Sciatic nerve (tissue), 2 donors: ENCODE measurements at regions of chr18 and their contacts with region 1.

Region 1: GRCh38 chr18:13216092-13216582 is 2.4 kb upstream of the LDLRAD4 start:
- DNase-seq: peak; percentile 82
- ATAC-seq: peak; percentile 89

Region 2: GRCh38 chr18:13178976-13179375 is 37.2 kb before region 1 on chr18:
- intact Hi-C with region 1: loop called (anchors 1 kb)
- DNase-seq: no peak
- ATAC-seq: no peak

Region 3: DNA sequence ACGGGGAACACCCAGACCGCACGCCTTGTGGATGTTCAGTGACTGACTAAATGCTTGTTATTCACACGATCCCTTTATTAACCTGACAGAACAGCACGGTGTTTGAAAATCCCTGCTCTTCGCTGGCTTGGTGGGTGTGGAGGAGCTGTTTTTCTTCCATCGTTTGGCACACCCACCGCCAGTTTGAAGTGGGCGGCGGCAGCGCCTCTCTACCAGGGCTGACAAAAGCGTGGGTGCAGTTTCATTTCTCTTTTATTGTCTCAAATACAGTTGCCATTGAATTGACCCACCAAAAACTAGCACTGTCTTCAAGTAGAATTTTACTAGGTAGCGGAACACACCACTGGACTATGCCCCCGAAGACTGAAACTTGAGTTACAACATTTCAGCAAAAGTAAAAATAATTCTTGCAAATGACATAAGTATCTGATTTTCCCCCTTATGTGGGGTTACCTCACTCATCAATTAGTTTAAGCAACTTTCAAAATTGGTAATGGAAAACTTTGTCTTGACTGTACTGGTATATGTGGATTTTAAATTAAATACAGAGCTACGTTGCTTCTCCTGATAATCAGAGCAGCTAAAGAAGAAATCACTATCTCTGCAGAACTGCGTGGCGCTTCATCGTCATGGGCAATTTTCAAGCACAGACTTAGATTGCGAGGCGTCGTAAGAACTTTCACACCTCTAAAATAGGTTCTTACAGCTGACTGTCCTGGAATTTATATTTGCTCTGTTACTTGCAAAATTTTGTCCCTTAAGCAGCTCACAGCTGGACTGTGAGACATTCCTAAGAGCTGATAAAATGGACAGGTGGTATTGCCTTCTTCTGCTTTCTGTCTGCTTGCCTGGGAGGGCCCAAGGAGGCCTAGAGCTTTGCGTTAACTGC is 63.3 kb after region 1 on chr18:
- intact Hi-C with region 1: no loop called
- DNase-seq: peak; percentile 30
- ATAC-seq: no peak

Region 4: DNA sequence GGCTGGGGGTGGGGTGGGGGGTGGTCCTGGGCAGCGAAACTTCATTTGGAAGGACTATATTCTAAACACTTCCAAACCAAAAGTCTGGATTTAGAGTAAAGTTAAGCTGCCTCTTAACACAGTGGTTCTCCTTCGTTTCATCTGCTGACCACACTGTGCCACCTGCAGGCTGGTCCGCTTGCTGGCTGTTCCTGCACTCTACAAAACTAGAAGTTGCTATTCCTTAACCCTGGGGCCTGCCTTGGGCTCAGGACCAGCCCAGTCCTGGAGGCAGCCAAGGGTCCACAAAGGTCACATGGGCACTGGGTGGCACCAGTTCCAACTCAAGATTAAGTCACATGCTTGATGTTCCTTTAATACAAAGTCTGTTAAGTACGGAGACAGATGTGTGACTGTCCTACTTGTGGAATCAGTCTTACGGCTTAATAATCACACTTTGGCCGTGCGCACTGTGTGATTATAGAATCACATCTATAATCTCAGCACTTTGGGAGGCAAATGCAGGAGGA is 314.8 kb after region 1 on chr18:
- intact Hi-C with region 1: loop called (anchors 5 kb)
- DNase-seq: peak; percentile 78
- ATAC-seq: peak; percentile 95